ENCODE measurements at regions of chr6 and their contacts with region 1.

Region 1: GRCh38 chr6:32393665-32394420 is 13.1 kb downstream of the BTNL2 start:
- DNase-seq: no peak
- ATAC-seq: peak; percentile 80

Region 2: GRCh38 chr6:32060966-32061655 is 332.7 kb before region 1 on chr6:
- intact Hi-C with region 1: no loop called
- DNase-seq: no peak
- ATAC-seq: no peak

Region 3: DNA sequence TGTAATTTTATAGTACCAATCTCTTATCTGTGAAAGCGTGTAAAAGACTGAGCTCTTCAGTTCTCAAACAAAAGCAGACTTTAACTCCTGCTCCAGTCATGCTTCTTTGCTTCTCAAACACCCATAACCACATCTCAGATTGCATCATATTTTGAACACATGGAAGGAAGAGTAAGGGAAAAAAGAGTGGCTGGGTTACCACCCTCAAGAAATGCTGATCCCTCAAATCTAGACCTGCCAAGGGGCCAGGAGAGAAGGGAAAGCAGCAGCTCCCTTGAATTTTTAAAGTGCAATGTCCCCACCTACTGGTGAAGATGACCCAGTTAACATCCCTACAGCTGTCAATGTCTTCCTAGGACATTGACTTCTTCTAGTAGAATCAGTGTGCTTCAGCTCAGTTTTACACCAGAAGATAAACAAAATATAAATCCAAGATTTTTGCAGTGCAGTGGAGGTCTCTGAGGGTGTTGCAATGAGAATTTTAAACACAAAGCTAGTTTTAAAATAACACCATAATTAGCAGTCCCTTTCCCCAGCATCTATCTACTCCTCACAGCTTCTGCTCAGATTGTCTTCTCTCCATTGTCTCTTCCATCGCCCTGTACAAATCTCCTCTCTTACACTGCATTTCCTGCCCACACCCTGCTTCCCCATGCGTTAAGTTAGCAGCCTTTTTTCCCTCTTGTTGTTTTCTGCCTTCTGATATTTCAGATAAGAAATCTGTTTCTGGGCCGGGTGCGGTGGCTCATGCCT is 392.1 kb after region 1 on chr6:
- intact Hi-C with region 1: loop called (anchors 10 kb)
- DNase-seq: no peak
- ATAC-seq: peak; percentile 79

Measured in left ventricle myocardium superior (tissue), 1 donor.